ENCODE measurements at regions of chr6 and their contacts with region 1.

Region 1: DNA sequence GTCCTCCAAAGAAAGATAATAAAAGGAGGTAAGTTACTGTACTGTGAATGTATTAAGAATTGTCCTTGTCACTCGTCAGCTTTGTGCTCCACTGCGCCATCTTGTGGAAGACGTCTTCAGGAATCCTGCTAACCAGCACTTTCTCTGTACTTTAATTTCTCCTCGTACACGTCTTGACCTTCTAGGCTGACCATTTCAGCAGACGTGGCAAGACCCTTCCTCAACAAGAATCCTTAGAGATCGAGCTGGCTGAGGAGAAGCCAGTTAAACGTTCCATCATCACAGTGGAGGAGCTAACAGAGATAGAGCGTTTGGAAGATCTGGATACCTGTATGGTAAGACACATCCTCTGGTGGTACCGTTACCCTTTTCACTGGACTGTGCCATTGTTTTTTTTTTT is 95.5 kb upstream of the SCGN start:
- H3K4me3 ChIP-seq: no peak overlapping the region
- H3K27ac ChIP-seq: no peak overlapping the region
- H3K4me1 ChIP-seq: no peaks in the 10 kb centered on the region
- CTCF ChIP-seq: peak; percentile 50; the same call in 1 of the 2 replicates

Region 2: DNA sequence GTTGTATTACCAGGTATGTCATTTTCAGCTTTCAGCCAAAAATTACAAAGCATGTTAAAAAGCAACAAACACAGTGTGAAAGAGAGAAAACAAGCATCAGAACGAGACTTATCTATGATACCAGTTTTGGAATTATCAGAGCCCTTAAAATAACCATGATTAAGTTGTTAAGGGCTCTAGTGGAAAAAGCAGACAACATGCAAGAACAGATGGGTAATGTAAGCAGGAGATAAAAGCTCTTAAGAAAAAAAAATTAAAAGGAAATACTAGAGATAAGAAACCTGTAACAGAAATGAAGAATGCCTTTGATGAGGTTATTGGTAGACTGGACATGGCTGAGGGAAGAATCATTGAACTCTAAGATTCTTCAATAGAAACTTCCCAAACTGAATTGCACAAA is 32.0 kb before region 1 on chr6:
- CTCF ChIA-PET with region 1: interaction called, 22 read pairs
- POLR2A ChIA-PET with region 1: no interaction called
- H3K4me3 ChIP-seq: no peak overlapping the region
- H3K27ac ChIP-seq: no peak overlapping the region
- H3K4me1 ChIP-seq: no peaks in the 10 kb centered on the region
- CTCF ChIP-seq: no peak

Region 3: DNA sequence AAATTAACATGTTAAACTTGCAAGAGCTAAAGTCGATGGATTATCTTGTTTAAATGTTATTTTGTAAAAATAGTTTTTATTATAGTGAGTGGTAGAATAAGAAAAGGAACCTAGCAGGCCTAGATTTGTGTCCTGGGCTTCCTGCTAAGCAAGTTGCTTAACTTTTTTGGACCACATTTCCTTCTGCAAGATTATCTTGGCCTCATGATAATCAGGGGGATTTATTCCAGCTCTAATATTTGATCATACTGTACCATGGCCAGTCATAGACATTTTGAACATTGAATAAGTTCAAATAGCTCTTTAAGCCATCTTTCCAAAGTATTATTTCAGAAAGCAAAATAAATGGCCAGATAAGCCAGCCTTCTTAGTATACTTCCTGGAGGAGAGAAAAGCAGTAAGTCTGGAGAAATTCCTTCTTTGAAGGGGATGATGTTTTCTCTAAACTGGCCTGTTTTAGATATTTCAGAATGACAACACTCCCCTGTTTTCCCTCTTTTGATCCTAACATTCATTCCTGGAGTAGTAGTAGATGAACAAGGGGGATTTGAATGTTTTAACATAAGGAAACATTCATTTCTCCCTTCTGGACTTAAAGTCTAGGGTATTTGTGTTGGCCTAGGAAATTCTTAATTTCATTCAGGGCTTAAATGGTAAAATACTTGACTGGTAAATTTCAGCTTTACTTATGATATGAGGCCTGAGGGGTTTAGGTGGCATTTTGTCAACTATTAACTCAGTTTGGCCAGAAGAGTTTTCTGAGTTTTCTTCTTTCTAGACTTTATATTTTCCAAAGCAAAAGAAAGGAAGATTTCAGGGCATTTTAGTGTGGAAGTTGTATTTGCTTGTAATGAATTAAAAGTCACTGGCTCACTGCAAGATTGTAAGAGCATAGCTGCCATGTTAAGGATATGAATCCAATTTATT is 13.3 kb before region 1 on chr6:
- CTCF ChIA-PET with region 1: interaction called, 25 read pairs
- POLR2A ChIA-PET with region 1: no interaction called
- H3K4me3 ChIP-seq: no peak overlapping the region
- H3K27ac ChIP-seq: no peak overlapping the region
- H3K4me1 ChIP-seq: no peaks in the 10 kb centered on the region; the same call in 1 of the 2 replicates
- CTCF ChIP-seq: no peak